ENCODE measurements at regions of chr11 and their contacts with region 1.

Region 1: GRCh38 chr11:47355283-47356128 is 3.0 kb upstream of the MYBPC3 start:
- DNase-seq: peak; percentile 96
- H3K4me3 ChIP-seq: peak overlapping the region; percentile 34 to 37
- H3K27ac ChIP-seq: peak overlapping the region; percentile 56 to 75
- H3K4me1 ChIP-seq: no peaks in the 10 kb centered on the region
- H3K27me3 ChIP-seq: no peaks in the 10 kb centered on the region
- CTCF ChIP-seq: peak; percentile 90 to 99 (median 95)
- POLR2A ChIP-seq: no peak

Region 2: DNA sequence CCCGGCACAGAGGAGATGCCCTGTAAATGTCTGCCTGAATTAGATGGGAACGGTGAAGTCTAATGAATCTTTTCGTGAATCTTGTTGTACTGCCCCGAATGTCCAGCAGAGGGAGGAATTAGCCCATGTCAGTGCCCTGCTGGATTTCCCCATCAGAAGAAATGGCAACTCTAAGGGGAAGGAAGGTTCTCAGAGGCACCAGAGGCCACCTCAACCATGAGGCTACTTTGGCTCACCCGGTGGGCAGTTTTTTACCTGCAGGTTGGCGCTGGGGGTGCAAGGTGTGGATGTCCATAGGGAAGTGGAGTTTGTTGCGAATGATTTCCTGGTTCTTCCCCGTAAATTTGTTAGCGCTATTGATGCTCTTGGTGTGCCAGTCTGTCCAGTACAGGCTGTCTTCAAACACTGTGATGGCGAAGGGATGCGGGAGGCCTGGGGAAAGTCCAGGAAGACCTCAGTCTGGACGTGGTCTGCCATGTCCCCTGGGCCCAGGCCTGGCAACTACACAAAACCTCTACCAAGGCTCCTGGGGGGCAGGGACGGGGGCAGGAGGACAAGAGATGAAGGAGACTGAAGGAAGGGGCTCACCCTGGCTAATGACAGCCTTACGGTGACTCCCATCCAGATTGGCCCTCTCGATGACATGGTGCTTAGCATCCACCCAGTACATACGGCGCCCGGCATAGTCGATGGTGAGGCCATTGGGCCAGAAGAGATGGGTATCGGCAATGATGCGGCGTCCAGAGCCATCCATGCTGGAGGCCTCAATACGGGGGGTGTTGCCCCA is 465.6 kb before region 1 on chr11:
- intact Hi-C with region 1: loop called (anchors 10 kb)
- DNase-seq: peak; percentile 76
- H3K4me3 ChIP-seq: no peak overlapping the region
- H3K27ac ChIP-seq: no peak overlapping the region
- H3K4me1 ChIP-seq: no peaks in the 10 kb centered on the region
- H3K27me3 ChIP-seq: no peaks in the 10 kb centered on the region
- CTCF ChIP-seq: peak; percentile 76 to 94 (median 90)
- POLR2A ChIP-seq: no peak

Region 3: DNA sequence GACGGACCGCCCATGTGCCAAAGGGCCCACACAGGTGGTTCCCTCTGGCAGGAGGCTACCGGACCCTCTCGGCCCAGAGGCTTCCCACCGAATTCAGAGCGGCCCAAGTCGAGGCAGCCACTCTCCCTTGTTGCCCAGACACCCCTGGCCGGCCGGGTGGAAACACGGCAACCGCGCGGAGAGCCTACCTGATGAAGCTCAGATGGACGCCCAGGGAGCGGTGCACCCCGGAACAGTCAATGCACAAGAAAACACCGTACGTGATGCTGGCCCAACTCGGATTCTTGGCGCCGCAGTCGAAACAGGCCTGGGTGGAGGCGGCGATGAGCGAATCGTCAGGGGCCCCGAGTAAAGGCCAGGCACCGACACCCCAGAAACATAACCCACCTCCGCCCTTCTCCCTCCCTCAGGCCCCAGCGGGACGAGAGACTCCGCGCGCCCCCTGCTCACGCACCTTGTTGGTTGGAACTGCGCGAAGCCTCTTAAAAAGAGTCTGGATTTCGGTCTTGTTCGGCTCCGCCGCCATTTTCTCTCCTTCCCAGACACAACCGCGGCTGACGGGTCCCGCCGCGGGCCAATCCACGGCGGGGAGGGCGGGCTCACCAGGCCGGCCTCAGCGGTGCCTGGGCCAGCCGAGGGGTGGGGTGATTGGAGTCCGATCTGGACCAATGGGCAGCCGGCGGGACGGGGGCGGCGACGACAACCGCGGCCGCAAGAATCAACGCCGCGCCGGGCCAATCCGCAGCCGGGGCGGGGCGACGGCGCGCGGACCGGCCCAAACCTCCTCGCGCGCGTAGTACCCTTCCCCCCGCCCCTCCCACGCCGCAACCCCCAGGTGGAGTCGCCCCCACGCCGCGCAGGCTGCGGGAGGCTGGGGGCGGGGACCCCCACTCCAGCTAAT is 178.9 kb before region 1 on chr11 and contains the start of gene ARFGAP2:
- intact Hi-C with region 1: loop called (anchors 5 kb)
- DNase-seq: peak; percentile 98
- H3K4me3 ChIP-seq: peak within 1 kb of the TSS; percentile 72 to 84
- H3K27ac ChIP-seq: peak within 1 kb of the TSS; percentile 97 to 100
- H3K4me1 ChIP-seq: peaks cover 16% of the 10 kb centered on the region
- H3K27me3 ChIP-seq: no peaks in the 10 kb centered on the region
- CTCF ChIP-seq: peak in 1 of 4 experiments; percentile 3
- POLR2A ChIP-seq: peak; percentile 32
- total RNA-seq, gene ARFGAP2: 111 to 146 TPM

Region 4: GRCh38 chr11:47259178-47259977 is 96.1 kb before region 1 on chr11:
- intact Hi-C with region 1: loop called (anchors 5 kb)
- DNase-seq: peak; percentile 31
- H3K4me3 ChIP-seq: no peak overlapping the region
- H3K27ac ChIP-seq: peak overlapping the region; percentile 70 to 79
- H3K4me1 ChIP-seq: peaks cover 37% of the 10 kb centered on the region
- H3K27me3 ChIP-seq: no peaks in the 10 kb centered on the region
- CTCF ChIP-seq: peak; percentile 18 to 72 (median 61)
- POLR2A ChIP-seq: no peak